ENCODE measurements at regions of chr2 and their contacts with region 1.

Region 1: DNA sequence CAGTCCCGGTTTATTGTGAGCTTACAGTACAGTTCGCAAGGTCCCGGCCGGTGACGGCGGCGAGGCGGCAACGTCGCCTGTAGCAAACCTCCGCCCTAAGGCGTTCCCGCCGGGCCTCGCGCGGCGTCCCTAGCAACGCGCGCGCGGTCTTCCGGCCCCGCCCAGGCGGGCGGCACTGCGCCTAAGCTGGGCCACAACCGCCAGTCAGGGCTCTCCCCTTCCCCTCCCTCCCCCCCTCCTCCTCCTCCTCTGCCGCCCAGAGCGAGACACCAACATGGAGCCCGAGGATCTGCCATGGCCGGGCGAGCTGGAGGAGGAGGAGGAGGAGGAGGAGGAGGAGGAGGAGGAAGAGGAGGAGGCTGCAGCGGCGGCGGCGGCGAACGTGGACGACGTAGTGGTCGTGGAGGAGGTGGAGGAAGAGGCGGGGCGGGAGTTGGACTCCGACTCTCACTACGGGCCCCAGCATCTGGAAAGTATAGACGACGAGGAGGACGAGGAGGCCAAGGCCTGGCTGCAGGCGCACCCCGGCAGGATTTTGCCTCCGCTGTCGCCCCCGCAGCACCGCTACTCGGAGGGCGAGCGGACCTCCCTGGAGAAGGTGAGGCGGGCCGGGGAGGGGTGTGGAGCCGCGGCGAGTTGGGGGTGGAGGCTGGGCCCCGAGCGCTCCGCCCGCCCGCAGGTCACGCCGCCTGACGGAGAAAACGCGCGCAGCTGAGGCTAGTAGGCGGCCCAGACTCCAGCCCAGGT is at the start of gene ALMS1:
- DNase-seq: peak; percentile 73 to 97 (median 86)
- ATAC-seq: peak; percentile 90
- H3K4me3 ChIP-seq: peak within 1 kb of the TSS; percentile 78
- H3K4me3 Mint-ChIP-seq: peak within 1 kb of the TSS; percentile 92
- H3K27ac ChIP-seq: peak within 1 kb of the TSS; percentile 75 to 78
- H3K27ac Mint-ChIP-seq: peak within 1 kb of the TSS; percentile 97
- H3K4me1 ChIP-seq: peaks cover 20% of the 10 kb centered on the region
- H3K4me1 Mint-ChIP-seq: peaks cover 45% of the 10 kb centered on the region
- H3K27me3 ChIP-seq: no peaks in the 10 kb centered on the region
- H3K27me3 Mint-ChIP-seq: no peaks in the 10 kb centered on the region
- CTCF ChIP-seq: no peak
- total RNA-seq, gene ALMS1: 20.2 to 20.6 TPM

Region 2: GRCh38 chr2:72825241-72826155 is 560.3 kb before region 1 on chr2 and contains the start of gene EXOC6B:
- CTCF ChIA-PET with region 1: no interaction called
- POLR2A ChIA-PET with region 1: no interaction called
- intact Hi-C with region 1: loop called in 1 of 2 experiments (anchors 5 kb)
- DNase-seq: peak; percentile 64 to 92 (median 86)
- ATAC-seq: peak; percentile 90
- H3K4me3 ChIP-seq: peak within 1 kb of the TSS; percentile 74
- H3K4me3 Mint-ChIP-seq: peak within 1 kb of the TSS; percentile 94
- H3K27ac ChIP-seq: no peak within 1 kb of the TSS
- H3K27ac Mint-ChIP-seq: peak within 1 kb of the TSS; percentile 78
- H3K4me1 ChIP-seq: peaks cover 12% of the 10 kb centered on the region
- H3K4me1 Mint-ChIP-seq: peaks cover 48% of the 10 kb centered on the region
- H3K27me3 ChIP-seq: peaks cover 0 to 4% of the 10 kb centered on the region in 2 experiments
- H3K27me3 Mint-ChIP-seq: peaks cover 8% of the 10 kb centered on the region
- CTCF ChIP-seq: no peak
- total RNA-seq, gene EXOC6B: 16.9 to 17.5 TPM

Region 3: DNA sequence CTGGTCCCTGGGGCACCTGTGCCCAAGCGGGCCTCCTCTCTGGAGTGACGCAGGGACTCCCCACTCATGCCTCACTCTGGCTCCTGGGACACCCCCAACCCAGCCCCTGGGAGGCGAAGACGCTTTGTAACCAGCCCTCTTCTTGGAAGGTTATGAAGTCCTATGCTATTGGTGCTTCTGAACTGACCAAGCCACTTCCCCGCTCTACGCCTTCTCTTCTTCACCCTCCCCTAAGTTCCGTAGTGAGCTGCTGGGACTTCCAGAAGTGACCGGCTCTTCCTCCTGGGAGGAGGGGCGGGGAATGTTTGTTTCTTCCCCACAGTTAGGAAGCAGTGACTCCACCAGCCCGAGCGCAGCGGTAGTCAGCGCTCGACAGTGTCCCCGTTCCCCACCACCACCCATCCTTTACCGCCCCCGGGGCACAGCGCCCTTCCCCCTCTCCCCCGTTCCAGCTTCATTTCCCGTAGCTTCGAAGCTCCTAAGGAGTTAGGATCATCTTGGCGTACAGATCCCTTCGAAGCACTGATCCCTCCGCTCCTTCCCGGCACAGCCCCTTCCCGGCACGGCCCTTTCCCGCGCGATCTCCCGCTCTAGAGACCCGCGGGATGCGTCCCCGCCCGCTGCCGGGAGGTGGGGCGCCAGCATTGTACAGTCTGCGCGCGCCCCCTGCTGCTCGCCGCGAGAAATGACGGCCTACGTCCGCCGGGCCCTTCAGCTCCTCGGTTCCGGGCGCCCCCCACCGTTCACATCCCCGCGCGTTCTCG is 208.7 kb before region 1 on chr2:
- CTCF ChIA-PET with region 1: interaction called, 10 read pairs
- POLR2A ChIA-PET with region 1: interaction called, 3 read pairs
- intact Hi-C with region 1: no loop called
- DNase-seq: peak; percentile 77 to 95 (median 86)
- ATAC-seq: peak; percentile 92
- H3K4me3 ChIP-seq: peak overlapping the region; percentile 70
- H3K4me3 Mint-ChIP-seq: peak overlapping the region; percentile 92
- H3K27ac ChIP-seq: no peak overlapping the region
- H3K27ac Mint-ChIP-seq: no peak overlapping the region
- H3K4me1 ChIP-seq: peaks cover 32% of the 10 kb centered on the region
- H3K4me1 Mint-ChIP-seq: peaks cover 15% of the 10 kb centered on the region
- H3K27me3 ChIP-seq: peaks cover 20 to 43% of the 10 kb centered on the region in 2 experiments
- H3K27me3 Mint-ChIP-seq: peaks cover 46% of the 10 kb centered on the region
- CTCF ChIP-seq: peak; percentile 98

Region 4: GRCh38 chr2:73284296-73285158 is 101.2 kb before region 1 on chr2 and contains the start of gene FBXO41:
- CTCF ChIA-PET with region 1: no interaction called
- POLR2A ChIA-PET with region 1: no interaction called
- intact Hi-C with region 1: loop called in 1 of 2 experiments (anchors 2 kb)
- DNase-seq: peak; percentile 36 to 79 (median 59)
- ATAC-seq: peak; percentile 79
- H3K4me3 ChIP-seq: peak within 1 kb of the TSS; percentile 73
- H3K4me3 Mint-ChIP-seq: peak within 1 kb of the TSS; percentile 91
- H3K27ac ChIP-seq: peak within 1 kb of the TSS in 1 of 2 donors; percentile 33
- H3K27ac Mint-ChIP-seq: peak within 1 kb of the TSS; percentile 37
- H3K4me1 ChIP-seq: peaks cover 22% of the 10 kb centered on the region
- H3K4me1 Mint-ChIP-seq: peaks cover 22% of the 10 kb centered on the region
- H3K27me3 ChIP-seq: no peaks in the 10 kb centered on the region
- H3K27me3 Mint-ChIP-seq: peaks cover 15% of the 10 kb centered on the region
- CTCF ChIP-seq: no peak
- total RNA-seq, gene FBXO41: 14.0 to 16.0 TPM

Region 5: GRCh38 chr2:73779467-73780236 is 393.9 kb after region 1 on chr2 and contains the start of gene DUSP11:
- CTCF ChIA-PET with region 1: no interaction called
- POLR2A ChIA-PET with region 1: no interaction called
- intact Hi-C with region 1: loop called in 1 of 2 experiments (anchors 10 kb)
- DNase-seq: peak; percentile 93 to 98 (median 96)
- ATAC-seq: peak; percentile 99
- H3K4me3 ChIP-seq: peak within 1 kb of the TSS; percentile 95
- H3K4me3 Mint-ChIP-seq: peak within 1 kb of the TSS; percentile 99
- H3K27ac ChIP-seq: peak within 1 kb of the TSS; percentile 85 to 91
- H3K27ac Mint-ChIP-seq: peak within 1 kb of the TSS; percentile 97
- H3K4me1 ChIP-seq: peaks cover 14% of the 10 kb centered on the region
- H3K4me1 Mint-ChIP-seq: peaks cover 45% of the 10 kb centered on the region
- H3K27me3 ChIP-seq: no peaks in the 10 kb centered on the region
- H3K27me3 Mint-ChIP-seq: peaks cover 11% of the 10 kb centered on the region
- CTCF ChIP-seq: peak; percentile 90
- total RNA-seq, gene DUSP11: 57.1 to 61.5 TPM

Region 6: DNA sequence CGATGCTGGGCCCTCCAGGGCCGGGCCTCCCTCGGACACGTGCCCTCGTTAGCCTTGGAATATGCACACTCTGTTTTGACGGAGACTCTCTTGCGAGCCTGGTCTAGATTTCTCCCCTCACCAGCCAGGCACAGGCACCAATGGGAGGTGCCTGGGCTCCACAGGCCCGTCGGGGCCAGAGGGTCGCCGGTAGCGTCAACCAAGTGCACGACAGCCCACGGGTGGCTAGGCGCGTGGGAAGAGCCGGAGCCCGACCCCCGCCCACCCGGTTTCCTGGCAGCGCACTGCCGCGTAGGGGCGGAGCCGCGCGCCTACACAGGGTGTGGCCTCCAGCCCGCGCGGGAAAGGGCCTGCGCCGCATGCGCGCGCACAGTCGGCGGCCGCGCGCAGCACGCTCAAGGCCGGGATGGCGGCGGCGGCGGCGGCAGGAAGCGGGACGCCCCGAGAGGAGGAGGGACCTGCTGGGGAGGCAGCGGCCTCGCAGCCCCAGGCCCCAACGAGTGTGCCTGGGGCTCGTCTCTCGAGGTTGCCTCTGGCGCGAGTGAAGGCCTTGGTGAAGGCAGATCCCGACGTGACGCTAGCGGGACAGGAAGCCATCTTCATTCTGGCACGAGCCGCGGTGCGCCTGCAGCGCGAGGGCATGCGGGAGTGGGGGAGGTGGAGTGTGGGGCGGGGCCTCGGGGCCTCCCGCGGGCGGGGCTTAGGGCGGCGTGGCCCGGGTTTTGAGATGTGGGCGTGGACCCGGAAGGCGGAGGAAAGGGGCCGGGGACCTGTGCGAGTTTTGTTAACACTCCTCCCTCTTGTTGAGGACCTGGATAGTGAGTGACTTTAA is 1572.7 kb after region 1 on chr2 and contains the start of gene POLE4:
- CTCF ChIA-PET with region 1: no interaction called
- POLR2A ChIA-PET with region 1: no interaction called
- intact Hi-C with region 1: loop called in 1 of 2 experiments (anchors 5 kb)
- DNase-seq: peak; percentile 89 to 96 (median 92)
- ATAC-seq: peak; percentile 87
- H3K4me3 ChIP-seq: peak within 1 kb of the TSS; percentile 60
- H3K4me3 Mint-ChIP-seq: peak within 1 kb of the TSS; percentile 87
- H3K27ac ChIP-seq: peak within 1 kb of the TSS; percentile 73 to 86
- H3K27ac Mint-ChIP-seq: peak within 1 kb of the TSS; percentile 83
- H3K4me1 ChIP-seq: peaks cover 22% of the 10 kb centered on the region
- H3K4me1 Mint-ChIP-seq: peaks cover 71% of the 10 kb centered on the region
- H3K27me3 ChIP-seq: no peaks in the 10 kb centered on the region
- H3K27me3 Mint-ChIP-seq: no peaks in the 10 kb centered on the region
- CTCF ChIP-seq: no peak
- total RNA-seq, gene POLE4: 34.9 to 38.4 TPM

Measured in CD4-positive, alpha-beta T cell (primary cell).